B cell (primary cell): ENCODE measurements at regions of chr9 and their contacts with region 1.

Region 1: DNA sequence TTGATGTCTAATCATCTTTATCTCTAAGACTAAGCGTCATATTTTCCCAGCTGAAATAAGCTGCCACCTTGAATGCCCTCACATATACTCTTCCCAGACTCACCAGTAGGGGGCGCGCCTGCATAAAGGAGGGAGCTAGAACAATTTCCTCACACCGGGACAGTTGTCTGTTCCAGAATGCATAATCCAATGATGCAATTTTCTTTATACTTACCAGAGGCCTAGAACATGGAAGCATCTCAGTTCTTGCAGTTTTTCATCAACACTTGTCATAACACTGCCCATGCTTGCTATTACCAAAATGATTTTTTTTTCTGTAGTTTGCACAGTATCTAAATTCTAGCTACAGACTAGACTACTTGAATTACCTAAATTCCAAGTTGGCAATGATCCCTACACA is 203.9 kb downstream of the FRMD3 start:
- DNase-seq: peak; percentile 56
- ATAC-seq: no peak
- H3K4me3 ChIP-seq: no peak overlapping the region
- H3K4me3 Mint-ChIP-seq: no peak overlapping the region
- H3K27ac ChIP-seq: no peak overlapping the region
- H3K27ac Mint-ChIP-seq: no peak overlapping the region
- H3K4me1 ChIP-seq: no peaks in the 10 kb centered on the region
- H3K4me1 Mint-ChIP-seq: no peaks in the 10 kb centered on the region
- H3K27me3 ChIP-seq: no peaks in the 10 kb centered on the region
- H3K27me3 Mint-ChIP-seq: no peaks in the 10 kb centered on the region
- CTCF ChIP-seq: peak; percentile 67

Region 2: DNA sequence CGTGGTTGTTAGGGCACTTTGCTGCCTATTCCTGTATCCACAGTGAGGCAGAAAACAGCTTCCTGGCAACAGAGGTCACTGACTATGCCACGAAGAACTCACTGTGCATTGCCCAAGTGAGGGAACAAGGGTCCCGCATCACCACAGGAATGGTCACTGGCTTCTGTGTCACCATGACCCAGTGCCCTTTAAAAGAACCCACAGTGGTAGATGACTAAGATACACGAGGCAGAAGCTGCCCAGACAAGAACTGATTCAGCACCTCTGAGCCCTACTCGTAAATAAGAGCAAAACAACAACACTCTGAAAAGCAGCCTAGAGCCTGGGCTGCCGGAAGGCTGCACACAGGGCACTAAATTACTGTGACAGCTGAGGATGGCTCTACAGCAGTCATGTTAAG is 34.7 kb before region 1 on chr9:
- CTCF ChIA-PET with region 1: no interaction called
- POLR2A ChIA-PET with region 1: no interaction called
- intact Hi-C with region 1: no loop called
- DNase-seq: no peak
- ATAC-seq: no peak
- H3K4me3 ChIP-seq: no peak overlapping the region
- H3K4me3 Mint-ChIP-seq: no peak overlapping the region
- H3K27ac ChIP-seq: no peak overlapping the region
- H3K27ac Mint-ChIP-seq: no peak overlapping the region
- H3K4me1 ChIP-seq: no peaks in the 10 kb centered on the region
- H3K4me1 Mint-ChIP-seq: no peaks in the 10 kb centered on the region
- H3K27me3 ChIP-seq: no peaks in the 10 kb centered on the region
- H3K27me3 Mint-ChIP-seq: peaks cover 2% of the 10 kb centered on the region
- CTCF ChIP-seq: no peak

Region 3: GRCh38 chr9:83473488-83473971 is 139.2 kb after region 1 on chr9:
- CTCF ChIA-PET with region 1: no interaction called
- POLR2A ChIA-PET with region 1: no interaction called
- intact Hi-C with region 1: no loop called
- DNase-seq: peak; percentile 34
- ATAC-seq: peak; percentile 31
- H3K4me3 ChIP-seq: peak overlapping the region; percentile 20 to 67 (median 26)
- H3K4me3 Mint-ChIP-seq: peak overlapping the region; percentile 71
- H3K27ac ChIP-seq: peak overlapping the region; percentile 30 to 58
- H3K27ac Mint-ChIP-seq: peak overlapping the region; percentile 69
- H3K4me1 ChIP-seq: peaks cover 13 to 15% of the 10 kb centered on the region in 2 donors
- H3K4me1 Mint-ChIP-seq: peaks cover 20% of the 10 kb centered on the region
- H3K27me3 ChIP-seq: no peaks in the 10 kb centered on the region
- H3K27me3 Mint-ChIP-seq: peaks cover 3% of the 10 kb centered on the region
- CTCF ChIP-seq: no peak

Region 4: GRCh38 chr9:83544002-83544698 is 209.8 kb after region 1 on chr9:
- CTCF ChIA-PET with region 1: interaction called, 24 read pairs
- POLR2A ChIA-PET with region 1: no interaction called
- intact Hi-C with region 1: no loop called
- DNase-seq: peak; percentile 27
- ATAC-seq: no peak
- H3K4me3 ChIP-seq: no peak overlapping the region
- H3K4me3 Mint-ChIP-seq: no peak overlapping the region
- H3K27ac ChIP-seq: no peak overlapping the region
- H3K27ac Mint-ChIP-seq: no peak overlapping the region
- H3K4me1 ChIP-seq: no peaks in the 10 kb centered on the region
- H3K4me1 Mint-ChIP-seq: no peaks in the 10 kb centered on the region
- H3K27me3 ChIP-seq: peaks cover 0 to 6% (median 3%) of the 10 kb centered on the region in 4 experiments
- H3K27me3 Mint-ChIP-seq: peaks cover 19% of the 10 kb centered on the region
- CTCF ChIP-seq: peak; percentile 45

Region 5: DNA sequence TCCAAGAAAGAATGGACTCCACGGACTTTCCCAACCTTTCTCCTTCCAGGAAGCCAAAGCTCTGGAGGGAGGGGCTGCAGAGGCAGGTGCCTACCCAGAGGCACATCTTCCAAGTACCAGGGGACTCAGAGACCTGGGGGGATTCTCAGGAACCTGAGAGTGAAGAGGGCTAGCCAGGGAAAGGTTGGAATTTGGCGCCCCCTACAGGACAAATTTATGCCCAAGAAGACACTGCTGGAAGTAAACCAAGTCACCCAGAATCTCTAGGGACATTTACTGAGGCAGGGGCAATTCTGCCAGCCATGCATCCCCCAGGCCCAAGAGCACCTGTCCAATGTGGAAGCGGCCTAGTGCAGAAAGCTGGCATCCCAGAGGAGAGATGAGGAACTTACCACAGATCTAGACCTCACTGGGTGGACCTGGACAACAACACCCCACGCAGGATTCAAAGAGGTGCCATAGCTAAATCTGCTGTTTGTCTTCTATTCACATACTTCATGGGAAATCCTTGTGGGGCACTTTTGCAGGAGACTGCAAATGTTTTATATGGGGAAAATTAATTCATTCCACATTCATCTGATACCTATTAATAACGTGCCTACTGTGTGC is 262.7 kb after region 1 on chr9:
- CTCF ChIA-PET with region 1: interaction called, 14 read pairs
- POLR2A ChIA-PET with region 1: no interaction called
- intact Hi-C with region 1: loop called (anchors 5 kb)
- DNase-seq: peak; percentile 45
- ATAC-seq: no peak
- H3K4me3 ChIP-seq: no peak overlapping the region
- H3K4me3 Mint-ChIP-seq: no peak overlapping the region
- H3K27ac ChIP-seq: no peak overlapping the region
- H3K27ac Mint-ChIP-seq: no peak overlapping the region
- H3K4me1 ChIP-seq: no peaks in the 10 kb centered on the region
- H3K4me1 Mint-ChIP-seq: no peaks in the 10 kb centered on the region
- H3K27me3 ChIP-seq: no peaks in the 10 kb centered on the region
- H3K27me3 Mint-ChIP-seq: peaks cover 1% of the 10 kb centered on the region
- CTCF ChIP-seq: peak; percentile 68